PC-9 (cell line): ENCODE measurements at regions of chr14 and their contacts with region 1.

Region 1: GRCh38 chr14:35687335-35687939 is 121.7 kb downstream of the RALGAPA1 start:
- DNase-seq: peak in 1 of 2 experiments; percentile 23
- H3K4me3 ChIP-seq: no peak overlapping the region
- H3K27ac ChIP-seq: no peak overlapping the region
- H3K4me1 ChIP-seq: no peaks in the 10 kb centered on the region
- H3K27me3 ChIP-seq: no peaks in the 10 kb centered on the region
- CTCF ChIP-seq: peak; percentile 85

Region 2: DNA sequence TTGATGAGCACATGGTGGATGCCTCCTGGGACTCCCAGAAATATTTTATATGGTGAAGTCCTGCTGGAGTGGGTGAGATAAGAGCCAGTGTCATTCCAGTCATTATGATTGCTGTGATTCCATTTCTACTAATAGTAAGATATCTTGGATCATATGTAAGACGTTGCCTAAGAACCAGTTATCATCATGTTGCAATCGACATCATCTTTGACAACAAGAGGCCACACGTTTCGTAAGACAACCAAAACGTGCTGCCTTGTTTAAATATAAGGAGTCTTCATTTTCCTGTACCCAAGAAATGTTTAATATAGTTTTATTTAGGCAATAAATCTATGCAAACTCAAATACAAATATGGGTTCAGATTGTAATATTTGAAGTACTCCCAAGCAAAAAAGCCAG is 1283.8 kb before region 1 on chr14:
- CTCF ChIA-PET with region 1: no interaction called
- POLR2A ChIA-PET with region 1: interaction called, 11 read pairs
- intact Hi-C with region 1: no loop called
- DNase-seq: no peak
- H3K4me3 ChIP-seq: no peak overlapping the region
- H3K27ac ChIP-seq: no peak overlapping the region
- H3K4me1 ChIP-seq: no peaks in the 10 kb centered on the region
- H3K27me3 ChIP-seq: no peaks in the 10 kb centered on the region
- CTCF ChIP-seq: no peak

Region 3: GRCh38 chr14:35229495-35230089 is 457.8 kb before region 1 on chr14:
- CTCF ChIA-PET with region 1: no interaction called
- POLR2A ChIA-PET with region 1: no interaction called
- intact Hi-C with region 1: loop called (anchors 10 kb)
- DNase-seq: no peak
- H3K4me3 ChIP-seq: no peak overlapping the region
- H3K27ac ChIP-seq: no peak overlapping the region
- H3K4me1 ChIP-seq: no peaks in the 10 kb centered on the region
- H3K27me3 ChIP-seq: no peaks in the 10 kb centered on the region
- CTCF ChIP-seq: peak; percentile 60

Region 4: DNA sequence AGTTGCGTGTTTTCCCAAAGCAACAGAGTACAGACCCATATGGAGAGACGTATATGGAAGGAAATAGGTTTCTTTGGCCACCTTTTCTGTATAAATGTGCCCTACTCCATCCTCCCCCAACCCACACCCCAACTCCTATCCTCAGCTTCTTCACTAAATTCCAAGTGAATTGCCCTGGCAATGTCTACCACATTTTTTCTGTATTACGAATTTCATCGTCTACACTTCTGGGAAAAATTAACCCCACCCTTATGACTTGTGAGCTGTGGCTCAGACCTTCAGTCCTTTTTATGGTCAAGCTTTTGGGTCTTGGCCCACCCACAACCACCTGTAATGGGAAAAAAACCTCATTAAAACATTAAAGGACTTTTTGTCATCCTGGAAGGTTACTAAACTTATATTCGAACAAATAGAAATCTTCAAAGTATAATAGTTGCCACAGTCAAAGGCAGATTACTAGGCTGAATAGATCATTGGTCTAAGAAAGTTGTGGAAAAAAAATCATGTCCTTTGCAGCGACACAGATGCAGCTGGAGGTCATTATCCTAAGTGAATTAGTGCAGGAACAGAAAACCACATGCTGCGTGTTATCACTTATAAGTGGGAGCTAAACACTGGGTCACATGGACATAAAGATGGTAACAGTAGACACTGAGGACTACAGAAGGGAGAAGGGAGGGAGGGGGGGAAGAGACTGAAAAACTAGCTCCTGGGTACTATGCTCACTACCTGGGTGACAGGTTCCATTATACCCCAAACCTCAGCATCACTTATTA is 267.2 kb before region 1 on chr14:
- CTCF ChIA-PET with region 1: no interaction called
- POLR2A ChIA-PET with region 1: no interaction called
- intact Hi-C with region 1: loop called (anchors 10 kb)
- DNase-seq: no peak
- H3K4me3 ChIP-seq: no peak overlapping the region
- H3K27ac ChIP-seq: no peak overlapping the region
- H3K4me1 ChIP-seq: no peaks in the 10 kb centered on the region
- H3K27me3 ChIP-seq: no peaks in the 10 kb centered on the region
- CTCF ChIP-seq: no peak